ENCODE measurements at regions of chrX and their contacts with region 1.

Region 1: DNA sequence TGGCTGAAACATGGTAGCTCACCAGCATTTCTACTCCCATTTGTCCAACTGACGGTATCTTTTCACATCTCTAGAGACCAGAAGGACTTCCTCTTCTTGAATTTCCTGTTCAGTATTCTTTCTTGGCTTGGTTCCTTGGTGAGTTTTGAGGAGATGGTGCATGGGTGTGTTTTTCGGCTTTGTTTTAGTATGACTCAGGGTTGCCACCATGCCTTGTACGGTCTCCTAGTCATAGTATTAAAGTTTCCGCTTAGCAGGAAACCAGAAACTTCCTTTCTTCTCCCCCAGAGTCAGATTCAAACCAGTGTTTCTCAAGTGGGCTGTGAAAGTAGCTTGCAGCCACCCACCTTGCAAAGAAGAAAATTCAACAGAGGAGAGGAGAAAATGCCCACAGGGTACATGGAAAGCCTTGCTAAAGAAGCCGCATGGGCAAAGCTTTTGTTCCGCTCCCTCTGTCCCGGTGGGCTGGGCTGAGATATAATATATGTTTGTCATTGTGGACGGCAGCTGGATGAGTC is 5.7 kb downstream of the CD99 start:
- DNase-seq: peak in 7 of 9 donors; percentile 37 to 75 (median 52)
- ATAC-seq: peak; percentile 82
- H3K4me3 ChIP-seq: peak overlapping the region; percentile 45
- H3K4me3 Mint-ChIP-seq: peak overlapping the region; percentile 68 to 96 (median 78)
- H3K27ac ChIP-seq: peak overlapping the region; percentile 18
- H3K27ac Mint-ChIP-seq: peak overlapping the region; percentile 23 to 95 (median 84)
- H3K4me1 ChIP-seq: peaks cover 60 to 82% of the 10 kb centered on the region in 2 donors
- H3K4me1 Mint-ChIP-seq: peaks cover 90 to 97% (median 92%) of the 10 kb centered on the region in 7 donors
- H3K27me3 ChIP-seq: no peaks in the 10 kb centered on the region
- H3K27me3 Mint-ChIP-seq: no peaks in the 10 kb centered on the region

Region 2: GRCh38 chrX:2577844-2578506 is 118.8 kb before region 1 on chrX:
- CTCF ChIA-PET with region 1: no interaction called
- POLR2A ChIA-PET with region 1: no interaction called
- intact Hi-C with region 1: no loop called
- DNase-seq: no peak
- ATAC-seq: no peak
- H3K4me3 ChIP-seq: no peak overlapping the region
- H3K4me3 Mint-ChIP-seq: no peak overlapping the region
- H3K27ac ChIP-seq: no peak overlapping the region
- H3K27ac Mint-ChIP-seq: no peak overlapping the region
- H3K4me1 ChIP-seq: no peaks in the 10 kb centered on the region
- H3K4me1 Mint-ChIP-seq: peaks cover 0 to 20% (median 9%) of the 10 kb centered on the region in 7 donors
- H3K27me3 ChIP-seq: peaks cover 13 to 24% of the 10 kb centered on the region in 2 donors
- H3K27me3 Mint-ChIP-seq: peaks cover 23 to 50% (median 46%) of the 10 kb centered on the region in 5 donors

Region 3: GRCh38 chrX:2640275-2641150 is 56.2 kb before region 1 on chrX:
- CTCF ChIA-PET with region 1: no interaction called
- POLR2A ChIA-PET with region 1: no interaction called
- intact Hi-C with region 1: loop called (anchors 2 to 5 kb)
- DNase-seq: no peak
- ATAC-seq: no peak
- H3K4me3 ChIP-seq: no peak overlapping the region
- H3K4me3 Mint-ChIP-seq: no peak overlapping the region
- H3K27ac ChIP-seq: no peak overlapping the region
- H3K27ac Mint-ChIP-seq: no peak overlapping the region
- H3K4me1 ChIP-seq: no peaks in the 10 kb centered on the region
- H3K4me1 Mint-ChIP-seq: peaks cover 0 to 4% (median 0%) of the 10 kb centered on the region in 7 donors
- H3K27me3 ChIP-seq: no peaks in the 10 kb centered on the region
- H3K27me3 Mint-ChIP-seq: no peaks in the 10 kb centered on the region

Region 4: DNA sequence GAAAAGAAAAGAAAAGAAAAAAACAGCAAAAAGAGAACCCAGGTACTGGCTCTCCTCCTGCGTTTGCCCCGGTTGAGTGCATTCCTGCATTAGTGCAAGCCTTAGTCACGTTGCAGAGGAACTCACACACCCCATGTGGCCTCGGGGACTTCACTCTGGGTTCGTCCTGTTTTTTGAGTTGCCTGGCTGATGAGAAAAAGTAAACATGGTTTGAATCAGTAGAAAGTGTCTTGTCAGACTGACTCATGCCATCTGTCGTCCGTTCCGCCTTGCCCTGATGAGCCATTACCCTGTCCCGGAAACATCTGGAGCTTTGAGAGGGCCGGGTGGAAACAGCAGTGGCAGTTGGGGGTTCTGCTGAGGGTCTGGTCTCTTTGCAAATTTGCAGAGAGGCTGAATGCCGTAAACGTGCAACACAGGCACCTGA is 10.6 kb after region 1 on chrX:
- CTCF ChIA-PET with region 1: no interaction called
- POLR2A ChIA-PET with region 1: no interaction called
- intact Hi-C with region 1: loop called (anchors 1 kb)
- DNase-seq: peak in 3 of 9 donors; percentile 31 to 69 (median 41)
- ATAC-seq: peak; percentile 66
- H3K4me3 ChIP-seq: no peak overlapping the region
- H3K4me3 Mint-ChIP-seq: peak overlapping the region; percentile 1 to 72 (median 62)
- H3K27ac ChIP-seq: no peak overlapping the region
- H3K27ac Mint-ChIP-seq: peak overlapping the region; percentile 42 to 96 (median 72)
- H3K4me1 ChIP-seq: peaks cover 42 to 75% of the 10 kb centered on the region in 2 donors
- H3K4me1 Mint-ChIP-seq: peaks cover 45 to 82% (median 74%) of the 10 kb centered on the region in 7 donors
- H3K27me3 ChIP-seq: no peaks in the 10 kb centered on the region
- H3K27me3 Mint-ChIP-seq: no peaks in the 10 kb centered on the region

Measured in naive thymus-derived CD4-positive, alpha-beta T cell (primary cell).